Right cardiac atrium (tissue), 5 donors: ENCODE measurements at regions of chr14 and their contacts with region 1.

Region 1: DNA sequence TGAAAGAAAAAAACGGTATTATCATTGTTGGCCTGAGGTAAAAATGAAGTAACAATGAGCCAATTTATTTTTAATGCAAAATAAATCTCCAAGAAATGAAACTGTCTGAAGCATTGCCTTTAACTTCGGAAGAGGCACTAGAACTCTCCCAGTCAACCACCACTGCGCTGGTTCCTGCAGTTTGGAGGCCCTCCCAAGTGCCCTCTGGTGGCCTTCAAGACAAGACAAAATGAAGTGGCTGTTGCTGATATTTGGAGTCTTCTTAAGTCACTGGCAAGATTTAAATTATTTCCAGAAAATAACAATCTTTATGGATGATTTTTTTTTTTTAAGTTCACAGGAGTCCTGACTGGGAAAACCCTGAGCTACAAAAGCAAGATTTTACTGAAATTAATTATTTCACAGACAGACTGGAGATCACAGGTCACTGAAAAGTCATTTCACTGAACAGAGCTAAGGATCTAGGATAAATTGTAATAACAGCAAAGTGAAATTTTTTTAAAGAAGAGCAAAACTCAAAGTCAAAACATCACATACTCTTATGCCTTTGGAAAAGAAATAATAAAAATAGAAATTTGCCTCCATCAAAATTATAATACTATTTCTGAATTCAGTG is 58.2 kb downstream of the DICER1 start:
- DNase-seq: peak; percentile 73 to 85 (median 77)
- ATAC-seq: peak; percentile 79 to 84
- H3K4me3 ChIP-seq: no peak overlapping the region
- H3K27ac ChIP-seq: no peak overlapping the region
- H3K4me1 ChIP-seq: peaks cover 10% of the 10 kb centered on the region
- H3K27me3 ChIP-seq: no peaks in the 10 kb centered on the region

Region 2: GRCh38 chr14:94689218-94689984 is 409.7 kb before region 1 on chr14:
- intact Hi-C with region 1: loop called in 3 of 4 experiments (anchors 5 kb)
- DNase-seq: peak; percentile 61 to 88 (median 86)
- ATAC-seq: peak; percentile 94
- H3K4me3 ChIP-seq: no peak overlapping the region
- H3K27ac ChIP-seq: no peak overlapping the region
- H3K4me1 ChIP-seq: no peaks in the 10 kb centered on the region
- H3K27me3 ChIP-seq: no peaks in the 10 kb centered on the region